BJ (cell line): ENCODE measurements at regions of chr22 and their contacts with region 1.

Region 1: DNA sequence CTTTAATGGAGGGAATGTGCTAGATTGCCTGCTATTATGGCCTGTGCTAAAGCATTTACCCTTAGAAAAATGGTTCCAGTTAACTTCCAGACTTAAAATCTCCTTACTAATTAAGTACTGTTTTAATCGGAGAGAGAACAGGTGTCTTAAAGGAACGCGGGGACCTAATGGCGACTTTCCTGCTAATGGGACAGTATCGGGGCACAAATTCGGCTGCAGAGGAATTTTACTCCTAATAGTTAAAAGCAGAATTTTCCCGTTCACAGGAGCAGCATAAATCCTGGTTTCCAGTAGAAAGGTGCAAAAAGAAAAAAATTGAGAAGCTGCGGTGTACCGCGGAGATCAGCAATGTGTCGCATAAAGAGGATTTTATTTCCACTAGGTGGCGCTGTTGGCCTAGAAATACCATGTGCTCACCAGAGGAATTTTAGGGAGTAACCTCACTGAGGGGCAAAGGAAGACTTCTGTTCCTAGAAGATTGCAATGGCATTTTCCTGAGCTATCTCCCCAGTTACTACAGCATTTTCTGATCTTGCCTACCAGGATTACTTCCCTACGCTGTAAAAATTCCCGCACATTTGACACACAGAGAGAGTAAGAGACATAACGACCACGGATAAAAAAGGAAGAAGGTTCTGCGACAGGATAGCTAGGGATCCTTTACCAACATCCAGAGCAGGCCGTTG is 44.5 kb downstream of the ZNF280B start:
- DNase-seq: no peak
- H3K4me3 ChIP-seq: no peak overlapping the region
- H3K27me3 ChIP-seq: no peaks in the 10 kb centered on the region; the same call in 1 of the 2 replicates
- CTCF ChIP-seq: peak; percentile 59

Region 2: GRCh38 chr22:22440188-22440587 is 23.8 kb before region 1 on chr22:
- CTCF ChIA-PET with region 1: interaction called, 11 read pairs
- POLR2A ChIA-PET with region 1: no interaction called
- DNase-seq: no peak
- H3K4me3 ChIP-seq: no peak overlapping the region
- H3K27me3 ChIP-seq: no peaks in the 10 kb centered on the region
- CTCF ChIP-seq: no peak

Region 3: DNA sequence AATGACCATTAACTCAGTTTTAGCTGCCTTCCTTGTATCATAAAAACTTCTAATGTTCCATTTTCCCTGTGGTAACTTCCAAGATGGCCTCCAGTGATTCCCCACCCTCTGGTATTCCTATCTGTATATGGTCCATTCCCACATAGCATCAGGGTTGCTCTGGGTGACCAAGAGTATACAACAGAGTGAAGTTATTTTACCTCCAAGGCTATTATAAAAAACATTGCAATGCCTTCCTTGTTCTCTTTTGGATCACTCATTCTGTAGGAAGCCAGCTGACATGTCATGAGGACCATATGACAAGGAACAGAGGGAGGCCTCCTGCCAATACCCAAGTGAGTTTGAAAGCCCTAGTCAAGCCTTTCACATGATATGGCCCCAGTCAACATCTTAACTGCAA is 14.5 kb after region 1 on chr22:
- CTCF ChIA-PET with region 1: interaction called, 13 read pairs
- POLR2A ChIA-PET with region 1: no interaction called
- DNase-seq: no peak
- H3K4me3 ChIP-seq: no peak overlapping the region
- H3K27me3 ChIP-seq: no peaks in the 10 kb centered on the region
- CTCF ChIP-seq: no peak

Region 4: DNA sequence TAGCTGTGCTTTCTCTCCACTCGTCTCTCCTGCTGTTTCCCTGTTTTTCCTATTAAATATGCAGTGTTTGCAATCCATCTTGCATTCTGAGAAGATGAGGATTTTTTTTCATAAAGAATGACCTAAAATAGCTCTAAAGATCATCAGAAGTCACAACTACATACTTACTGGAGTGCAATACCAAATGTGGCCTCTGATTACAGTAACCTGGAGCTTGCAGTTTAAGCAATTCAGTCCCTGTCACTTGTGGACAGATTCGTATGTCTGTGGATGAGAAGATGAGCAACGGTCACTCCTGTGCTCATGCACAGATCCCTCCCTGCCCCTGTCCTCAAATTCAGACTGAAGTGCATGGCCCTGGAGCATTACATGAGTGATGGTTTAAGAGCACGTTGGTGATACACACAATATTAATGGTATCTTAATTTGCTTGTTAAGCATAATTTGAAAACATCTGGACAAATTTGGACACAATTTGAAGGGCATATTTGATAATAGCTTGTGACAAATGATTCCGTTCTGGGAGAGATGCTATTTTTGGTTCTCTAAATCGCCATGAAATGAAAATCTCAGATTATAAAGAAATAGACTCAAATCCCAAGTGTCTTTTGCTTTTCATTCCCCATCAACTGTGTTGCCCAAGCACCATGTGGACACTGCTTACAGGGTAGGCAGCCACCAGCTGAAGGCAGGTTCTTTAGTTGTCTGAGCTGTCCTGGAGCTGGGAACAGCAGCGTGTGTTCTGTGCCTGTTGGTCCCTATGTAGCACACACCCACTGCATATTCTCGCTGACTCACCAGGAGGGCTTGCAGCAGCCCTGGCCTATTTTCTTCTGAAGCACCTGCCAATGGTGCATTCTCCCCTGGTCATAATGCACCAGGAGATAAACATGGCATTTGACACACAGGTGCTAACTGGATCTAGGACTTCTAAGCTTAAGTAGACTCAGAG is 127.6 kb after region 1 on chr22:
- CTCF ChIA-PET with region 1: interaction called, 14 read pairs
- POLR2A ChIA-PET with region 1: no interaction called
- DNase-seq: no peak
- H3K4me3 ChIP-seq: no peak overlapping the region
- H3K27me3 ChIP-seq: no peaks in the 10 kb centered on the region; the same call in 1 of the 2 replicates
- CTCF ChIP-seq: no peak